ENCODE measurements at regions of chr5 and their contacts with region 1.

Region 1: GRCh38 chr5:36744773-36745589 is 131.6 kb upstream of the NIPBL start:
- DNase-seq: peak; percentile 45
- H3K4me3 Mint-ChIP-seq: peak overlapping the region; percentile 78
- H3K27ac Mint-ChIP-seq: no peak overlapping the region
- H3K4me1 Mint-ChIP-seq: peaks cover 8% of the 10 kb centered on the region
- H3K27me3 Mint-ChIP-seq: peaks cover 43% of the 10 kb centered on the region

Region 2: DNA sequence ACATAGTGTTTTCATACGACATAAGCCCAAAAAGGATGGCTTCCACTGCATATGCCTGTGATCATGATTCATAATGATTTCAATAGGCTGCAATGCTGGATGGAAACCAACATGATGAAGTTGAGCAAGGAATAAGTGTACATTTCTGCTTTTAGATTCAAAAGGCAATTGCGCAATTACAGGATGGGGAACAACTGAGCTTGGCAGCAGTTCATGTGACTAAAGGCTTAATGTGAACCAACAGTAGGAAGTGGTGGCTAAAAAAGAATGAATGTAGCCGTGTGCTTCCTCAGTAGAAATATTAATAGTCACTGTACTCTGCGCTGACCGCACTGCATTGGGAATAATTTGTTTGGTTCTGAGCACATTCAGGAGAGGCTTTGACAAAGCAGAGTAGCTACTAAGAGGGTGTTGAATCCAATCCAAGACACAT is 87.4 kb before region 1 on chr5:
- CTCF ChIA-PET with region 1: no interaction called
- POLR2A ChIA-PET with region 1: no interaction called
- intact Hi-C with region 1: no loop called
- DNase-seq: no peak
- H3K4me3 Mint-ChIP-seq: no peak overlapping the region
- H3K27ac Mint-ChIP-seq: no peak overlapping the region
- H3K4me1 Mint-ChIP-seq: no peaks in the 10 kb centered on the region
- H3K27me3 Mint-ChIP-seq: peaks cover 12% of the 10 kb centered on the region

Region 3: DNA sequence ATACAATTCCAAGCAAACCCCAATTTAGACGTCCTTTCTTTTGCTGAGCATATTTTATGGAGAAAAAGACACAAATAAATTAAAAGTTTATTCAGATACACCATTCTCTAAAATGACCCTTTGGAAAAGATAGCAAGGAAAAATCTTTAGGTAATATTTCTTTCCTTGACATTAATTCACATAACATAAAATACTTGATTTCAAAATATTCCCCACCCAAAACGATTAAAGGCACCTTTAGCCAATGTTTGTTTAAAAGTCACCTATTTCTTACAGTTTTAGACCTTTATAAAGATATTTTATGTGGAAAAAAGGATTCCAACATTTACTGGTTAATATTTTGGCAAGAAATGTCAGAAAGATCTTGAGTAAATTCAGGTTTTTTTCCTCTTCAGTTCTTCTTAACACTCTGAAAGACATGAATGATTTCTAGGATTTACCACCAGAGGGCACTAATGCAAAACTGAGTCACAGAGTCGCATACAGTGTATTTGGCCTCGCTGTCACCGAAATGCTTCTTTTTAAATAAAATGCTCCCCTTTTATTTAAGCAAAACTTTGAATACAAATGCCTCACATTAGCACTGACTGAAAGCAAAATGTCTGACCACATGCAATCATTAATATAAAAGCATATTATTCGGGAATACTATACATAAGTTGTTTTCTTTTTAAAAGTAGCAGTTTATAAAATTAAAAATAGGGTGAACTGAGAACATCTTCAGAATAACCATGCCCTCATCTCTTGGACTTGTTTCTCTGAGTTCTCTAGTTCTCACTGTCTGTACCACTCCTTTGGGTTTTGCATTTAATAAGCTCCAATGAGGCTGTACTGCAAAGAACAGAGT is 16.1 kb before region 1 on chr5:
- CTCF ChIA-PET with region 1: interaction called, 30 read pairs
- POLR2A ChIA-PET with region 1: no interaction called
- intact Hi-C with region 1: no loop called
- DNase-seq: no peak
- H3K4me3 Mint-ChIP-seq: no peak overlapping the region
- H3K27ac Mint-ChIP-seq: no peak overlapping the region
- H3K4me1 Mint-ChIP-seq: peaks cover 4% of the 10 kb centered on the region
- H3K27me3 Mint-ChIP-seq: peaks cover 5% of the 10 kb centered on the region

Region 4: GRCh38 chr5:36854402-36855140 is 109.6 kb after region 1 on chr5:
- CTCF ChIA-PET with region 1: no interaction called
- POLR2A ChIA-PET with region 1: no interaction called
- intact Hi-C with region 1: no loop called
- DNase-seq: no peak
- H3K4me3 Mint-ChIP-seq: no peak overlapping the region
- H3K27ac Mint-ChIP-seq: no peak overlapping the region
- H3K4me1 Mint-ChIP-seq: no peaks in the 10 kb centered on the region
- H3K27me3 Mint-ChIP-seq: peaks cover 7% of the 10 kb centered on the region

Region 5: GRCh38 chr5:36944607-36945225 is 199.7 kb after region 1 on chr5:
- CTCF ChIA-PET with region 1: interaction called, 11 read pairs
- POLR2A ChIA-PET with region 1: no interaction called
- intact Hi-C with region 1: no loop called
- DNase-seq: no peak
- H3K4me3 Mint-ChIP-seq: no peak overlapping the region
- H3K27ac Mint-ChIP-seq: no peak overlapping the region
- H3K4me1 Mint-ChIP-seq: peaks cover 40% of the 10 kb centered on the region
- H3K27me3 Mint-ChIP-seq: no peaks in the 10 kb centered on the region

Region 6: DNA sequence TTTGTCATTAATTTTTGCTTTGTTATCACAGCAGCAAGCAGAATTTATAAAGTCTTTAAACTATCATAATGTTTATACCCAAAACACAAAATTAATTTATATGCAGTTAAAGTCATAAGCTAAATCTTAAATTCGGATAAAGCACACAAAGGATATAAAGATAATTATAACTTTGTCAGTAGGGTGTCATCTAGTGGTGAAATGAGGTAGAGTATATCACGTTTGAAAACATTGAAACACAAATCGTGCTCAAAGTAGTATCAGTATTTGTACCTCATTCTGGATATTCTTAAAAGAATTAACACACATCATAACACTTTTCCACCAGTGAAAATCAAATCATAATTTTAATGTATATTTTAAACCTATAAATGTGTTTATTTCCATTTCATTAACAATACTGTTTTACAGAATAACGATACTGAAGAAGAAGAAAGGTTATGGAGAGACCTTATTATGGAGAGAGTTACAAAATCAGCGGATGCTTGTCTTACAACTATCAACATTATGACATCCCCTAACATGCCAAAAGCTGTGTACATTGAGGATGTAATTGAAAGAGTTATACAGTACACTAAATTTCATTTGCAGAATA is 261.1 kb after region 1 on chr5:
- CTCF ChIA-PET with region 1: interaction called, 24 read pairs
- POLR2A ChIA-PET with region 1: no interaction called
- intact Hi-C with region 1: no loop called
- DNase-seq: no peak
- H3K4me3 Mint-ChIP-seq: no peak overlapping the region
- H3K27ac Mint-ChIP-seq: no peak overlapping the region
- H3K4me1 Mint-ChIP-seq: no peaks in the 10 kb centered on the region
- H3K27me3 Mint-ChIP-seq: no peaks in the 10 kb centered on the region

Measured in activated CD4-positive, alpha-beta memory T cell treated with anti-CD3 and anti-CD28 coated beads for 36 hours (primary cell).